ENCODE measurements at regions of chr1 and their contacts with region 1.

Region 1: DNA sequence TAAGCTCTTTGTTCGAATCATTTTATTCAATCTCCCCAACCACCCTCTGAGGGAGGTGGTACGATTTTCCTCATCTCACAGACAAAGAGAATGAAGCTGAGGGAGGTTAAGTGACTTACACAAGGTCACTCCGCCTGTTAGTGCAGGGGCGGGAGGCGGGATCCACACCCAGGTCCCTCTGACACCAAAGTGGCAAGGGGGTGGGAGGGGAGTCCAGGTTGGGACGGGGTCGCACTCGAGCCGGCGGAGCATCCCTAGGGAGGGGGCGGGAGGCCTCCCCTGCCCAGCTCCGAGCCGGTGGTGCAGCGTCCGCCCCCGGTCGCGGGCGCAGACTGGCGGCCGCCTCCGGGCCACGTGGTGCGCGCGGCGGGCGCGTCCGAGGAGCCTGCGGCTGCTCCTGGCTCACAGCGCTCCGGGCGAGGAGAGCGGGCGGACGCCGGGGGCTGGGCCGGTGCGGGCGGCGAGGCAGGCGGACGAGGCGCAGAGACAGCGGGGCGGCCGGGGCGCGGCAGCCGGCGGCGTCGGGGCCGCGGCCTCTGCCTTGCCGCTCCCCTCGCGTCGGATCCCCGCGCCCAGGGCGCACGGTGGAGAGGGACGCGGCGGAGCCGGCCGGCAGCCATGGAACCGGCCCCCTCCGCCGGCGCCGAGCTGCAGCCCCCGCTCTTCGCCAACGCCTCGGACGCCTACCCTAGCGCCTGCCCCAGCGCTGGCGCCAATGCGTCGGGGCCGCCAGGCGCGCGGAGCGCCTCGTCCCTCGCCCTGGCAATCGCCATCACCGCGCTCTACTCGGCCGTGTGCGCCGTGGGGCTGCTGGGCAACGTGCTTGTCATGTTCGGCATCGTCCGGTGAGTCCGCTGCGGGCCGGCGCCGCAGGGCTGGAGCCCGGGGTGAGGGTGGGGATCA is at the start of gene OPRD1:
- DNase-seq: no peak
- ATAC-seq: no peak
- H3K4me3 ChIP-seq: no peak within 1 kb of the TSS
- H3K27ac ChIP-seq: no peak within 1 kb of the TSS
- H3K4me1 ChIP-seq: peaks cover 0 to 4% (median 0%) of the 10 kb centered on the region in 9 donors
- H3K27me3 ChIP-seq: peaks cover 0 to 91% (median 72%) of the 10 kb centered on the region in 7 donors
- CTCF ChIP-seq: no peak
- total RNA-seq, gene OPRD1: 0.02 to 0.04 TPM in 2 of 10 donors, not detected in the others

Region 2: GRCh38 chr1:28865997-28866650 is 54.1 kb after region 1 on chr1:
- intact Hi-C with region 1: loop called in 1 of 10 experiments (anchors 5 kb)
- DNase-seq: no peak
- ATAC-seq: no peak
- H3K4me3 ChIP-seq: no peak overlapping the region
- H3K27ac ChIP-seq: no peak overlapping the region
- H3K4me1 ChIP-seq: no peaks in the 10 kb centered on the region
- H3K27me3 ChIP-seq: peaks cover 0 to 47% (median 16%) of the 10 kb centered on the region in 7 donors
- CTCF ChIP-seq: no peak

Region 3: GRCh38 chr1:28935293-28935692 is 123.3 kb after region 1 on chr1:
- intact Hi-C with region 1: loop called in 1 of 10 experiments (anchors 5 kb)
- DNase-seq: no peak
- ATAC-seq: no peak
- H3K4me3 ChIP-seq: no peak overlapping the region
- H3K27ac ChIP-seq: no peak overlapping the region
- H3K4me1 ChIP-seq: peaks cover 0 to 3% (median 0%) of the 10 kb centered on the region in 9 donors
- H3K27me3 ChIP-seq: no peaks in the 10 kb centered on the region
- CTCF ChIP-seq: no peak

Measured in heart right ventricle (tissue), 16 donors.